ENCODE measurements at regions of chr4 and their contacts with region 1.

Region 1: DNA sequence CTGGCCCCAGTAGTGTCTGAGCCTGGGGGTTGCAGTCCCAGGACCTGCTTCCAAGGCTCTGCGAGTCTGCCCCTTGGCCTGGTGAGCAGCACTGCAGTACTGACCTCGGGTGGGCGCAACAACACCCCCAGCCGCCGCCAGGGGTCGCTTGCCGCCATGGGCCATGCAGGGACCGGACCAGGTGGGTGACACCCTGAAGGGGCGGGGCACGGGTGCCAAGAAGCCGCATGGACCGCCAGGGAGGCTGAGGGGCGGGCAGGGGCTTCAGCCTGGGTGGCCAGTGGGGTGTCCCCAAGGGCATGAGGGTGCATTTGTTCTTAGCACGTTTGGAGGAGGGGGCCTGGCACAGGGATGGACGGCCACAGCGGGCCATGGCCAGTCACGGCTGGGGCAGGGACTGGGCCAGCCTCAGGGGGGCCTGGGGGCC is 25.0 kb downstream of the TACC3 start:
- DNase-seq: peak; percentile 69
- H3K4me3 Mint-ChIP-seq: no peak overlapping the region
- H3K27ac Mint-ChIP-seq: no peak overlapping the region
- H3K4me1 Mint-ChIP-seq: no peaks in the 10 kb centered on the region
- H3K27me3 Mint-ChIP-seq: no peaks in the 10 kb centered on the region

Region 2: GRCh38 chr4:1759818-1760223 is 13.5 kb after region 1 on chr4:
- intact Hi-C with region 1: no loop called
- DNase-seq: no peak
- H3K4me3 Mint-ChIP-seq: no peak overlapping the region
- H3K27ac Mint-ChIP-seq: no peak overlapping the region
- H3K4me1 Mint-ChIP-seq: no peaks in the 10 kb centered on the region
- H3K27me3 Mint-ChIP-seq: peaks cover 12% of the 10 kb centered on the region

Region 3: DNA sequence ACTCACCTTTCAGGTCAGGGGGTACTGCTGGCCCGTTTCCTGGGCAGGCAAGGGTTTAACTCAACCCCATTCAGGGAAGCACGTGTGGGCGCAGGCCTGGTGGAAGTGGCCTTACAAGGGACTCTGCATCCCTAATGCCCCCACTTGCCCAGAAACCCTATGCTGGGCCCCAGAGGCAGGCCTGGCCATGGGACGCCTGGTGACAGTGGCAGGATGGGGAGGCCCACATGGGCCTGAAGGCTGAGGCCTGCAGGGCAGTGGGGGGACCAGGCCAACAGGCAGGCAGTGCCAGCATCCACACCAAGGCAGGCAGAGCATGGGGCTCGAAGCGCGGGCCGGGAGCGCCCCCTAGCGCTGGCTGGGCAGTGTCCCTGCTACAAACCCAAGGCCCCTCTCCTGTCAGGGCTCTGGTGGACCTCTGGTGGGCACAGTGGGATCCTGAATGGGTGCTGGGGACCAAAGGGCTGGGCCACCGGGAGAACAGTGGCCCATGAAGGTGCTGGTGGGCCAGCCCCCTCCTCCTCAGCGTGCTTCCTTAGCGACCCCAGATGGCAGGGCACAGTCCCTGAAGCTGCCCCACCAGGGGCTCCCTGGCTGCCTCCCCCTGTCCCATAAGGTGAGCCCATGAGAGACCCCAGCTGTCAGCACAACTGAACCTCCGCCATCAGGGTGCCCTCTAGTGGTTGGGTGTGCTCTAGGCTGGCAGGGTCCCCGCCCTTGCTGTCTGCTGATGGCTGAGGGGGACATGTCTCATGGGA is 63.7 kb after region 1 on chr4:
- intact Hi-C with region 1: loop called (anchors 1 kb)
- DNase-seq: peak; percentile 60
- H3K4me3 Mint-ChIP-seq: no peak overlapping the region
- H3K27ac Mint-ChIP-seq: no peak overlapping the region
- H3K4me1 Mint-ChIP-seq: no peaks in the 10 kb centered on the region
- H3K27me3 Mint-ChIP-seq: no peaks in the 10 kb centered on the region

Region 4: DNA sequence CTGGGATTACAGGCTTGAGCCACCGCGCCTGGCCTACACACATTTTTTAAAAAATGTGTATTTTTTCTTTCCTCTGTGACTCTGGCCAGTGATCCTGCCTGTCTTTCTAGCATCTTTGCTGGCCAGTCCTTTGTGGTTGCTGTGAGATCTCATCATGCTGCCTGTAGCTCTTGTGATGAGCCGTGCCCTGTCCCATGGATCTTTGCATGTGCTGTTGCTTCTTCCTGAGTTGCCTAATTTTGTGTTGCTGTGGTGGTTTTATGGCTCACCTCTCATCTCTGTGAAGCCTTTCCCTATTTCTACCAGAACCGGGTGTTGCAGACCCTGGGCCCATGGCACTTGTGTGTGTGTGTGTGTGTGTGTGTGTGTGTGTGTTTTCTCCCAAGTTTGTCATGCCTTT is 133.2 kb after region 1 on chr4:
- intact Hi-C with region 1: no loop called
- DNase-seq: no peak
- H3K4me3 Mint-ChIP-seq: no peak overlapping the region
- H3K27ac Mint-ChIP-seq: peak overlapping the region; percentile 46
- H3K4me1 Mint-ChIP-seq: peaks cover 47% of the 10 kb centered on the region
- H3K27me3 Mint-ChIP-seq: no peaks in the 10 kb centered on the region

Region 5: DNA sequence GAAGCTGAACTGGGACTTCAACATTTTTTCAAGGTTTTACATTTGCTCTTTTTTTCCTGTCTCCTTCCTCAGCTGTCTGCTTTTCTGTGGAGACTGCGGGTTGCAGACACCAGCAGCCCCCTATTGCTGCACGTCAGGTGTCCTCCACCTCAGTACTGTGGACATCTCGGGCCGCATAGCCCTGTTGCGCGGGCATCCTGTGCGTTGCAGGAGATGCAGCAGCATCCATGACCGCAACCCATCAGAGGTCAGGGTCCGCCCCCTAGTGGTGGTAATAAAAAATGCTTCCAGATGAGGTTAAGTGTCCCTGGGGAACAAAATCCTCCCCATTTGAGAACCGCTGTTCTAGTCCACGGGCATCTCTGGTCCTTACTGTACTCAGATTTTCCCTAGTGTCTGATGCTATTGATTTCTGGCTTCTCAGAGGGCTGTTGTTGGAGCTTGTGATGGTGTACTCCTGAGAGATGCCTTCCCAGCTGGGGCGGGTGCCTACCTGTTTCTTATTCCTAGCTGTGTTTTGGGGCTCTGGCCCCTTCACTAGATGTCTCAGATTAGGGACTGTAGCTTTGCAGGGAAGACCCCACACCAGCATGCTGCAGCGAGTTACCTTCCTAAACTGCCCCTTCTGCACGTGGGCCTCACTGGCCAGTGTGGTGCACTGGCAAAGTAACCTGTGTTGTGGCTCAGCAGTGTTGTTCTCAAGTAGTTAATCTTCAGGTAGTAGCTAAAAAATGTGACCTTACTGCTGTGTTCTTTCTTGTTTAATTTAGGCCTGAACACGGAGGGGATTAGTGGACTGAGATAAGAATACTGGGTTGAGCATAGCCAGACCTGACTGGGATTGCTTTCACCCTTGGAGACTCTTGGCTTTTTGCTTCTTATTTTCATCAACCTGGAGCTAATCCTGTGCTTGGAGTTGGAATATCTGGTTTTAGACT is 153.1 kb after region 1 on chr4:
- intact Hi-C with region 1: loop called (anchors 2 kb)
- DNase-seq: peak; percentile 65
- H3K4me3 Mint-ChIP-seq: peak overlapping the region; percentile 44
- H3K27ac Mint-ChIP-seq: peak overlapping the region; percentile 89
- H3K4me1 Mint-ChIP-seq: peaks cover 44% of the 10 kb centered on the region
- H3K27me3 Mint-ChIP-seq: no peaks in the 10 kb centered on the region